A549 (cell line): ENCODE measurements at regions of chr17 and their contacts with region 1.

Region 1: DNA sequence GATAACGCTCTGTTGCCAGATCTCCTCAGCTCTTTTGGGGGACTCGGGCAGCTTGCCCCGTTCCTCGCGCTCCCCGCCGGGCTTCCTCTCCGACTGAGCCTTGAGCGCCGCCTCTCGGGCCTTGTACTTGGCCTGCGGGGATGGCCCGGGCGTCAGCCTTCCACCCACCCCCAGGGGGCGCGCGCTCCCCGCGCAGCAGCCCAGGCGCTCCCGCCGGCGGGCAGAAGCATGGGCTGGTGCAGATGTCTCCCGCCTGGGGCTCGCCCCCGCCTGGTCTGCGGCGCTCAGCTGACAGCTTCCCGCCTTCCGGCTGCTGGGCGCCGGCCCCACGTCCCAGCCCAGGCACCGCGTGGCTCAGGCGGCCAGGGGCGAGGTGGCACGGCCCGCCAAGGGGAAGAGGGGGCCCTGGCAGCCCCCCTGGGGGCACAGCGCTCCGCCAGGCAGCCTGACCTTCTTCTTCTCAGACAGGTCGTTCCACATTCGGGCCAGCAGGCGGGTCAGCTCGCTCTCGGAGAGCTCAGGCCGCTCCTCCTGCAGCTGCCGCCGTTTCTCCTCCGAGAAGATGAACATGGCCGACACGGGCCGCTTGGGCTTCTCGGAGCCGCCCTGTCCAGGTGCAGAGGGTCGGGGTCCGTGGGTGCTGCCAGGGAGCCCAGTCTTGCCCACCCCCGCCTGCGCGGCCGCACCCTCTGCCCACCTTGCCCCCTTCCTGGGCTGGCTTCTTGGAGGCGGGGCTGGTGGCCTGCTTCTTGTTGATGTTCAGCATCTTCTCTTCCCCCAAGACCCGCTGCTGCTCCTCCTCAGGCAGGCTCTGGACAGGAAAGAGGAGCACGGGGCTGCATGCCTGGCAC is 8.9 kb downstream of the UBTF start:
- DNase-seq: peak; percentile 84 to 91
- ATAC-seq: peak; percentile 77 to 92
- H3K4me3 ChIP-seq: no peak overlapping the region
- H3K27ac ChIP-seq: peak overlapping the region in 1 of 2 experiments; percentile 65; a peak in 2 of 6 replicates
- H3K4me1 ChIP-seq: peaks cover 27% of the 10 kb centered on the region
- CTCF ChIP-seq: peak; percentile 99
- EP300 ChIP-seq: no peak
- POLR2A ChIP-seq: no peak
- RAD21 ChIP-seq: peak; percentile 84 to 96

Region 2: GRCh38 chr17:44186307-44187130 is 24.0 kb before region 1 on chr17 and contains the start of gene TMUB2:
- CTCF ChIA-PET with region 1: interaction called, 61 read pairs
- POLR2A ChIA-PET with region 1: interaction called, 4 read pairs
- DNase-seq: peak; percentile 100
- ATAC-seq: peak; percentile 85 to 88
- H3K4me3 ChIP-seq: peak within 1 kb of the TSS; percentile 87
- H3K27ac ChIP-seq: peak within 1 kb of the TSS; percentile 92 to 97
- H3K4me1 ChIP-seq: peaks cover 24% of the 10 kb centered on the region
- CTCF ChIP-seq: no peak
- EP300 ChIP-seq: no peak
- POLR2A ChIP-seq: peak; percentile 98
- RAD21 ChIP-seq: no peak
- polyA plus RNA-seq, gene TMUB2: 36.2 and 43.3 TPM in 2 replicates

Region 3: GRCh38 chr17:44253006-44253405 is 42.4 kb after region 1 on chr17:
- CTCF ChIA-PET with region 1: interaction called, 11 read pairs
- POLR2A ChIA-PET with region 1: no interaction called
- DNase-seq: no peak
- ATAC-seq: no peak
- H3K4me3 ChIP-seq: no peak overlapping the region
- H3K27ac ChIP-seq: no peak overlapping the region
- H3K4me1 ChIP-seq: no peaks in the 10 kb centered on the region
- CTCF ChIP-seq: no peak
- EP300 ChIP-seq: no peak
- POLR2A ChIP-seq: no peak
- RAD21 ChIP-seq: no peak

Region 4: GRCh38 chr17:44287651-44288050 is 77.1 kb after region 1 on chr17:
- CTCF ChIA-PET with region 1: interaction called, 10 read pairs
- POLR2A ChIA-PET with region 1: no interaction called
- DNase-seq: no peak
- ATAC-seq: no peak; a peak in 1 of 6 replicates
- H3K4me3 ChIP-seq: no peak overlapping the region
- H3K27ac ChIP-seq: no peak overlapping the region
- H3K4me1 ChIP-seq: no peaks in the 10 kb centered on the region
- CTCF ChIP-seq: no peak
- EP300 ChIP-seq: no peak
- POLR2A ChIP-seq: no peak
- RAD21 ChIP-seq: no peak

Region 5: DNA sequence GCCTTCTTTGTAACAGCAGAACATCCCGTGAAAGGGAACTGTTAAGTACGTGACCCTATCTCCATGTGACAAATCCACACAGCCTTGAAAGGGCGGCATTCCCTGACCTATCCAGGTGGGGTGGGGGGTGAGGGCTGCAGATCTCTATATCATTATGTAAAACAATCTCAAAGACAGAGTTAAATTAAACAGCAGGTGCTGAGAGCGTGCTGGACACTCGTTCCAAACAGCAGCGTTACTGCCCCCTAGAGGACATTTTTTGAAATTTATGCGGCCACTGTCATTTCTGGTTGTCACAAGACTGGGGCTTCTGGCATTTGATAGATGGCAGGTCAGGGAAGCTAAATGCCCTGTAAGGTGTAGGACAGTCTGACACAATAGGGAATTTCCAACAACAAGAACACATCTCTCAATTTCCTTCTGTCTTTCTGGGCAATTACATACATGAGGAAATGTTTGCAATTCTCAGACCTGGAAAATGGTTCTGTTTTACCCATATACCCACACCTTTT is 120.7 kb after region 1 on chr17:
- CTCF ChIA-PET with region 1: interaction called, 246 read pairs
- POLR2A ChIA-PET with region 1: interaction called, 4 read pairs
- DNase-seq: peak; percentile 84
- ATAC-seq: peak; percentile 52 to 57
- H3K4me3 ChIP-seq: no peak overlapping the region
- H3K27ac ChIP-seq: no peak overlapping the region
- H3K4me1 ChIP-seq: peaks cover 8% of the 10 kb centered on the region
- CTCF ChIP-seq: peak; percentile 96
- EP300 ChIP-seq: no peak
- POLR2A ChIP-seq: no peak
- RAD21 ChIP-seq: peak; percentile 74 to 86

Region 6: DNA sequence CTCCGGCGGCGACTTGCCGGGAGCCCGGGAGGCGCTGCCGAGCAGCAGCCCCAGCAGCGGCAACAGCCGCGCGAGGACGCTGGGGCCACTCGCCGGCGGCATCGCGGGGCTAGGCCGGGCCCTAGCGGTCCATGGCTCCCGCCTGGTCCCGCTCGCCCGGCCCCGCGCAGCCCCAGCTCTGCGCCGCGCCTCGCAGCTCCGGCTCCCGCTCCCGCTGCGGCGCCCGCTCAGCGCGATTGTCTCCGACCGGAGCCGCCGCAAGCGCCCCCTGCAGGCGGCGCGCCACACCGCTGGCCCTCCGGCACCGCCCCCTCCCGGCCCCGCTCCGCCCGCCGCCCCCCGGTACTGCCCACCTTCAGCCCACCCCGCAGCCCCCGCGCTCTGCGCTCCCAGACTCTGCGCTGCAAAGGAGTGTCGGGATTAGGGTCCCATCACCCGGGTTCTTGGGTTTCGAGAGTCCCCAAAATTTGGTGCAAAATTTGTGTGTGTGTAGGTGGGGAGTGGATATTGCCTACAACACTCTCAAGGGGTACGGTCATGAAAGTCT is 153.1 kb after region 1 on chr17 and contains the start of gene FAM171A2:
- CTCF ChIA-PET with region 1: interaction called, 15 read pairs
- POLR2A ChIA-PET with region 1: no interaction called
- DNase-seq: peak; percentile 66 to 74
- ATAC-seq: peak; percentile 76 to 83
- H3K4me3 ChIP-seq: peak within 1 kb of the TSS; percentile 77
- H3K27ac ChIP-seq: peak within 1 kb of the TSS; percentile 76 to 92
- H3K4me1 ChIP-seq: peaks cover 20% of the 10 kb centered on the region
- CTCF ChIP-seq: peak; percentile 98
- EP300 ChIP-seq: no peak
- POLR2A ChIP-seq: peak; percentile 36
- RAD21 ChIP-seq: peak in 1 of 2 experiments; percentile 42; a peak in 2 of 5 replicates
- polyA plus RNA-seq, gene FAM171A2: 1.8 and 2.7 TPM in 2 replicates

Region 7: DNA sequence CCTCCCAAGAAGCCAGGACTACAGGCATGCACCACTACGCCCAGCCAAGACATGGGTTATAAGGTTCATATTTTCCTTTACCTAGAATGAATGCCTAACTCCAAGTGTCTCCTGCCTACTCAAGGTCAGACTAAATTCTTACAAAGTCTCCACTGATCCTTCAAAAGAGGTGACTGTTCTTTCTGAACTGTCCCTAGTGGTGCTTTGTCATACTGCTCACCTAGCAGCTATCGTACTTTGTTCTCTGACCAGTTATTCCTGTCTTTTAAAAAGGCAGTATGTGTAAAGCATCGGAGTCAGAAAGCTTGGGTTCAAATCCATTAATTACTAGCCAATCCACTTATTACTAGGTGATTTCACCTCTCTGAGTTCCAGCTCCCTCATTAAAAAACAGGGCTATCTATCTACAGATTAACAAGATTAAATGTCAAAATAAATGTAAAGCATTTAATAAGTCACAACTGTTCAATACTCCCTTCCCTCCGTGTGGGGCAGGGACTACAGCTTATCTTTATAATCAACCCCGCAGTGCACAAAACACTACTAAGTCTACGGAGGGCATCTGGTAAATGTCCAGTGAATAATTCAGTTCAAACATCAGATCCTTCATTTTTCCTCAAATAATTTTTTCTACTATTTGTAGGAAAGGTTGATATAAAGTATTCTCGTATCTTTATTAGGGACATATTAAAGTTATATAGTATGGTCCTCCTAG is 198.9 kb after region 1 on chr17:
- CTCF ChIA-PET with region 1: no interaction called
- POLR2A ChIA-PET with region 1: no interaction called
- DNase-seq: no peak
- ATAC-seq: peak; percentile 56 to 71; a peak in 4 of 6 replicates
- H3K4me3 ChIP-seq: no peak overlapping the region
- H3K27ac ChIP-seq: no peak overlapping the region
- H3K4me1 ChIP-seq: no peaks in the 10 kb centered on the region
- CTCF ChIP-seq: no peak
- EP300 ChIP-seq: no peak
- POLR2A ChIP-seq: no peak
- RAD21 ChIP-seq: no peak